ENCODE measurements at regions of chr9 and their contacts with region 1.

Region 1: GRCh38 chr9:123389070-123389469 is 33.1 kb downstream of the CRB2 start:
- DNase-seq: no peak
- H3K4me3 ChIP-seq: no peak overlapping the region
- H3K27ac ChIP-seq: no peak overlapping the region
- H3K4me1 ChIP-seq: no peaks in the 10 kb centered on the region
- H3K27me3 ChIP-seq: no peaks in the 10 kb centered on the region
- CTCF ChIP-seq: no peak

Region 2: DNA sequence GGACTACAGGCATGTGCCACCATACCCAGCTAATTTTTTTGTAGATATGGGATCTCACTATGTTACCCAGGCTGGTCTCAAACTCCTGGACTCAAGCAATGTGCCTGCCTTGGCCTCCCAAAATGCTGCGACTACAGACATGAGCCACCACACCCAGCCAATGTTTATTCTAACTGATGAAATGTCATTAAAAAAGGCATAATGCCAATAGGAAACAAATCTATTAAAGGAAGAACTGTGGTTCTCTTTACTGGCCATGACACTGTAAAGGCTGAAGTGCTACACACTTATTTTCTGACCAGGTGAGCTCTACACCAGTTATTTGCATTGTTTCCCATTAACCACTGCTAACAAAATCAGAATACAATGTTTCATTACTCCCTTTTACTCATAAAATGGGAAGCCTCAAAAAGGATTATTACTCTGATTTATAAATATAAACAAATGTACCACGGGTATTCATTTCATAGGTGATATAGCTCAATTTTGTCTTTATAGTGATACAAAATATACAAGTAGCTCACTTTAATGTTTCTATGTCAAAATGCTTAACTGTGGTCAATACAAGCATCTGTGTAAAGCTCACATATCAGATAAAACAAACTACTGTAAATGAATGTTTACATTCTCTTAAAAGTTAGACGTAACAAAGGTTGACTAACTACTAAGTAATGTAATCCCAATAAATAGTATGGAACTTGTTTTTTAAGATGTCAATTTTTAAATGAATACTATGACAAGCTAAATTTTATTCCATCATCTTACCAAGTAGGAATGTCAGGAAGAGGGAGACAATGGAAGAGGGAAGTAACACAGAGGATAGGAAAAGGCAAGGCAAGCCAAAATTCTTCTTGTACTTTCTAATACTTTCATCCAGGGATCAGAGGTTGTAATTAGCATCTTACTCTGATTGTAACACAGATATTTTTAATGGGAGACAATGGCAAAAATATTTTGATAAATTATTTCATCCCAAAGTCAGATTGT is 226.4 kb before region 1 on chr9:
- CTCF ChIA-PET with region 1: interaction called, 14 read pairs
- POLR2A ChIA-PET with region 1: no interaction called
- intact Hi-C with region 1: no loop called
- DNase-seq: no peak
- H3K4me3 ChIP-seq: no peak overlapping the region
- H3K27ac ChIP-seq: no peak overlapping the region
- H3K4me1 ChIP-seq: no peaks in the 10 kb centered on the region
- H3K27me3 ChIP-seq: no peaks in the 10 kb centered on the region
- CTCF ChIP-seq: no peak

Measured in PC-9 (cell line).